HCT116 (cell line): ENCODE measurements at regions of chrX and their contacts with region 1.

Region 1: GRCh38 chrX:16212436-16212835 is 45.2 kb downstream of the MAGEB17 start:
- DNase-seq: peak; percentile 7
- ATAC-seq: peak; percentile 87
- H3K4me3 ChIP-seq: no peak overlapping the region
- H3K27ac ChIP-seq: no peak overlapping the region
- H3K4me1 ChIP-seq: peaks cover 0 to 12% of the 10 kb centered on the region in 2 experiments; a peak in 2 of 4 replicates
- H3K27me3 ChIP-seq: no peaks in the 10 kb centered on the region
- CTCF ChIP-seq: peak; percentile 40 to 58 (median 45); a peak in 5 of 6 replicates
- POLR2A ChIP-seq: no peak
- RAD21 ChIP-seq: peak; percentile 77

Region 2: GRCh38 chrX:15761564-15762191 is 450.8 kb before region 1 on chrX:
- CTCF ChIA-PET with region 1: no interaction called
- POLR2A ChIA-PET with region 1: no interaction called
- RAD21 ChIA-PET with region 1: no interaction called
- intact Hi-C with region 1: loop called (anchors 10 kb)
- DNase-seq: no peak
- ATAC-seq: peak; percentile 66; the same call in 1 of the 2 replicates
- H3K4me3 ChIP-seq: no peak overlapping the region
- H3K27ac ChIP-seq: no peak overlapping the region
- H3K4me1 ChIP-seq: no peaks in the 10 kb centered on the region
- H3K27me3 ChIP-seq: no peaks in the 10 kb centered on the region
- CTCF ChIP-seq: peak; percentile 18 to 70 (median 66); a peak in 5 of 6 replicates
- POLR2A ChIP-seq: no peak
- RAD21 ChIP-seq: peak; percentile 54